ENCODE measurements at regions of chr13 and their contacts with region 1.

Region 1: DNA sequence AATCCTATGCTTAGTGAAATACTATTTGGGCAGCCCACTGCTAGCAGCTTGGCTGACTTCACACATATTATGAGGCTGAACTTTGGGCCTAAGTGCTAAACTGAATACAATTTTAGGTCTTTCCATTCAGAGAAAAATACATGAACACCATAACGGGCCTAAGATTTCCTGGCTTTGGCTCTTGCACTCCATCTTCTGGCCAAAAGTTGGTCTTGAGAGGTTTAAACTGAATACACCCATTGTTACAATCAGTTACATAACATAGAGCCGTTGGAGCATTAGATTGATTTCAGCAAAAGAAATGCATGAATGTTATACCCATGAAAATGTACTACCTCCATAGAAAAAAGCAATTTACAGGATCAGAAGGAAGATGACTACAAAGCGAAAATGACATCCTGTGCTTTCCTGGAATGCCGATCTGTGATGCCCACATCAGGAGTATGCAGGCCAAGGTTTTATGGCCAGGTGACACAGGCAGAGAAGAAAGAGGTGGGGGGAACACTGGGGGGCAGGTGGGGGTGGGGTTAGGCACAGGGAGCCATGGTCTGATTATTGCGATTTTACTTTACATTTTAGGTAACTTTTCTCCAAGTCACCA is 11.1 kb upstream of the SHISA2 start:
- DNase-seq: peak in 5 of 9 experiments; percentile 33 to 72 (median 54)
- ATAC-seq: peak; percentile 52
- H3K4me3 ChIP-seq: no peak overlapping the region
- H3K4me3 Mint-ChIP-seq: no peak overlapping the region
- H3K27ac ChIP-seq: no peak overlapping the region
- H3K27ac Mint-ChIP-seq: no peak overlapping the region
- H3K4me1 ChIP-seq: no peaks in the 10 kb centered on the region
- H3K4me1 Mint-ChIP-seq: no peaks in the 10 kb centered on the region
- H3K27me3 ChIP-seq: no peaks in the 10 kb centered on the region
- H3K27me3 Mint-ChIP-seq: no peaks in the 10 kb centered on the region
- CTCF ChIP-seq: peak; percentile 68

Region 2: DNA sequence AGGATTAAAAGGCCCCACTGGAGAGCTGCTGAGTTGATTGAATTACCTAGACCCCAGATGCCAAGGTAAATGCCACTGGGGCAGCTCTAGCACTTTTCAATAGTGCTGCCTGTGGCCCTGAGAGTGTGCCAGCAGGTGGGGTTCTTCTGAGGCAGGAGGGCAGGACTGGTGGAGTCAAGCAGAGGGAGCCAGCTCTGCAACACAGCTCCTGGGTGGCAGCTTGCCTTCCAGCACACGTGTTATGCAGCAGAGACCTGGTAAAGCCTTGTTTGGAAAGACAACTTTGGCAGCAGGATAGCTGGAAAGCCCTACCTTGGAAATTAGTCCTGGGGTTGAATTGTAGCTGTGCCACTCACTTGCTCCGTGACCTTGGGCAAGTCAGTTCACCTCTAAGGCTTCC is 384.5 kb before region 1 on chr13:
- CTCF ChIA-PET with region 1: interaction called, 3 read pairs
- POLR2A ChIA-PET with region 1: no interaction called
- intact Hi-C with region 1: loop called (anchors 1 to 2 kb)
- DNase-seq: peak in 4 of 9 experiments; percentile 5 to 35 (median 24)
- ATAC-seq: no peak
- H3K4me3 ChIP-seq: no peak overlapping the region
- H3K4me3 Mint-ChIP-seq: no peak overlapping the region
- H3K27ac ChIP-seq: no peak overlapping the region
- H3K27ac Mint-ChIP-seq: no peak overlapping the region
- H3K4me1 ChIP-seq: no peaks in the 10 kb centered on the region
- H3K4me1 Mint-ChIP-seq: no peaks in the 10 kb centered on the region
- H3K27me3 ChIP-seq: no peaks in the 10 kb centered on the region
- H3K27me3 Mint-ChIP-seq: peaks cover 9% of the 10 kb centered on the region
- CTCF ChIP-seq: no peak

Region 3: GRCh38 chr13:25827831-25828465 is 235.0 kb before region 1 on chr13:
- CTCF ChIA-PET with region 1: interaction called, 7 read pairs
- POLR2A ChIA-PET with region 1: no interaction called
- intact Hi-C with region 1: loop called (anchors 1 to 2 kb)
- DNase-seq: no peak
- ATAC-seq: no peak
- H3K4me3 ChIP-seq: no peak overlapping the region
- H3K4me3 Mint-ChIP-seq: no peak overlapping the region
- H3K27ac ChIP-seq: no peak overlapping the region
- H3K27ac Mint-ChIP-seq: no peak overlapping the region
- H3K4me1 ChIP-seq: no peaks in the 10 kb centered on the region
- H3K4me1 Mint-ChIP-seq: no peaks in the 10 kb centered on the region
- H3K27me3 ChIP-seq: no peaks in the 10 kb centered on the region
- H3K27me3 Mint-ChIP-seq: peaks cover 2% of the 10 kb centered on the region
- CTCF ChIP-seq: no peak

Region 4: DNA sequence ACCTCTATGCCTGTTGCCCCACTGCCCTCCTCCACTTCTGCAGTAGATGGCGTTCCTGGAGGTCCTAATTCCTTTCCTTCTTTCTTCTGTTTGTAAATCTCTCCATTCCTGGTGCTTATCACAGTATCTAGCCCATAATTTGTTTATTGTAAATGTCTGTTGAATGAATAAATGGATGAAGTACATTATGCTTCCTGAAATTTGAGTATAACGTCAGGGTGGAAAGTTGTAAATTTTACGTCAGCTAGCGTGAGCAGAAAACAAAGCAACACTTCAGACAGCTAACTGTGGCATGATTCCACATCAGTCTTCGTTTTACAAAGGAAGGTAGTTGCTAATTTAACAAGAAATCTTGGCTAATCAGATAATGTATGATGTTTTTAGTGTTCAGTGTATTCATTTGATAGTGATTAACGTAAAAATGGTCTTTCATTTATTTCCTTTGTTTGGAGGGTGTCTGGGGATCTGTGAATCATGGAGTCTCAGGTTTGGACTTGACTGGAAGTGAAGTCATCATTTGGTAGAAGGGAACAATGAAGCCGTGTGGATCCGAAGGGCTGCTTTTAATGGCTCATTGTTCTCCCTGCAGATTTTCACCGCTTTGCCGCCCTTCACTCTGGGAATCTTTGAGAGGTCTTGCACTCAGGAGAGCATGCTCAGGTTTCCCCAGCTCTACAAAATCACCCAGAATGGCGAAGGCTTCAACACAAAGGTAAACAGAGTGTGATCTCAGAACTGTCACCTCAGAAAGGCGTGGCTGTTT is 226.2 kb before region 1 on chr13:
- CTCF ChIA-PET with region 1: interaction called, 9 read pairs
- POLR2A ChIA-PET with region 1: no interaction called
- intact Hi-C with region 1: loop called in 1 of 2 experiments (anchors 2 kb)
- DNase-seq: no peak
- ATAC-seq: no peak
- H3K4me3 ChIP-seq: no peak overlapping the region
- H3K4me3 Mint-ChIP-seq: no peak overlapping the region
- H3K27ac ChIP-seq: no peak overlapping the region
- H3K27ac Mint-ChIP-seq: no peak overlapping the region
- H3K4me1 ChIP-seq: no peaks in the 10 kb centered on the region
- H3K4me1 Mint-ChIP-seq: no peaks in the 10 kb centered on the region
- H3K27me3 ChIP-seq: no peaks in the 10 kb centered on the region
- H3K27me3 Mint-ChIP-seq: peaks cover 2% of the 10 kb centered on the region
- CTCF ChIP-seq: no peak

Region 5: GRCh38 chr13:25980255-25980654 is 82.7 kb before region 1 on chr13:
- CTCF ChIA-PET with region 1: no interaction called
- POLR2A ChIA-PET with region 1: no interaction called
- intact Hi-C with region 1: loop called in 1 of 2 experiments (anchors 5 kb)
- DNase-seq: peak in 1 of 9 experiments; percentile 35
- ATAC-seq: peak; percentile 40
- H3K4me3 ChIP-seq: no peak overlapping the region
- H3K4me3 Mint-ChIP-seq: no peak overlapping the region
- H3K27ac ChIP-seq: no peak overlapping the region
- H3K27ac Mint-ChIP-seq: no peak overlapping the region
- H3K4me1 ChIP-seq: peaks cover 4% of the 10 kb centered on the region
- H3K4me1 Mint-ChIP-seq: peaks cover 15% of the 10 kb centered on the region
- H3K27me3 ChIP-seq: no peaks in the 10 kb centered on the region
- H3K27me3 Mint-ChIP-seq: no peaks in the 10 kb centered on the region
- CTCF ChIP-seq: no peak